Esophagus muscularis mucosa (tissue), 4 donors: ENCODE measurements at regions of chr2 and their contacts with region 1.

Region 1: DNA sequence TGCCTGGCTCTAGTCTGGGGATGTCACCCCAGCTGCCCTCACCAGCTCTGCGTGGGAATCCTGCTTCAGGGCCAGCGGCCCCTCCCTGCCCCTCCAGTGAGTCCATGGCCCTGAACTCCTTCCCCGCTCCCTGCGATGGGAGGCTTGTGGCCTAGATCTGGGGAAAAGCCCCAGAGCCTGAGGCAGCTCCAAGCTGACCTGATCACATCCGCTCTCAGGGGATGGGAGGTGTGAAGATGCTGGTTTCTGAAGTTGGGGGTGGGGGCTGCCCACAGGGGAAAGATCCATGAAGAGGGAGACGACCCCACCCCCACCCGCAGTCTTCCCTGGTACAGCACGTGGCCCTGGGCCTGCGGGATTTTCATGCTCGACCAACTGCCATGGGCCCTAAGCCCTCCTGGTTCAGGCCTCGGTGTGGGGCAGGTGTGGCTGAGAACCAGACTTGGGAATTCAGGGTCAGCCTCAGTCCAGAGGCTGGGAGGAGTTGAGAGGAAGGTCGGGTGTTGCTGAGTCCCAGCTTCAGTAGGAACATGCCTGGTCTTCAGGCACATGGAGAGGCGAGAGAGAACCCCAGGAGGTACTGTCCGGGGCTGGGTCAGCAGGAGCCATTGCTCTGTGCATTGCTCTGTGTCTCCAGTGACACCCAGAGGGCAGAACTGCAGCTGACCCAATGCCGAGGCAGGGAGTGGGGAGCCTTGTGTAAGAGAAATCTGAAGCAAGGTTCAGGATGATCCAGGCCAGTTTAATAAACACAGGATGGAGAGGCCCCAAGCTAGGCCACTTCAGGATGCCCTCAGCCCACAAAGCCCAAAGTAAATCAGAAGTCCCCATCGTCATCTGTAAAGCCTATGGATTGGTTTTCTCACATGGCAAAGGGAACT is 115.1 kb downstream of the CAPN13 start:
- DNase-seq: peak; percentile 88
- H3K4me3 ChIP-seq: no peak overlapping the region
- H3K27ac ChIP-seq: peak overlapping the region; percentile 18 to 82 (median 55)
- H3K4me1 ChIP-seq: peaks cover 33 to 84% (median 80%) of the 10 kb centered on the region in 4 donors
- H3K27me3 ChIP-seq: no peaks in the 10 kb centered on the region
- CTCF ChIP-seq: peak in 1 of 3 experiments; percentile 25
- EP300 ChIP-seq: no peak
- POLR2A ChIP-seq: no peak

Region 2: DNA sequence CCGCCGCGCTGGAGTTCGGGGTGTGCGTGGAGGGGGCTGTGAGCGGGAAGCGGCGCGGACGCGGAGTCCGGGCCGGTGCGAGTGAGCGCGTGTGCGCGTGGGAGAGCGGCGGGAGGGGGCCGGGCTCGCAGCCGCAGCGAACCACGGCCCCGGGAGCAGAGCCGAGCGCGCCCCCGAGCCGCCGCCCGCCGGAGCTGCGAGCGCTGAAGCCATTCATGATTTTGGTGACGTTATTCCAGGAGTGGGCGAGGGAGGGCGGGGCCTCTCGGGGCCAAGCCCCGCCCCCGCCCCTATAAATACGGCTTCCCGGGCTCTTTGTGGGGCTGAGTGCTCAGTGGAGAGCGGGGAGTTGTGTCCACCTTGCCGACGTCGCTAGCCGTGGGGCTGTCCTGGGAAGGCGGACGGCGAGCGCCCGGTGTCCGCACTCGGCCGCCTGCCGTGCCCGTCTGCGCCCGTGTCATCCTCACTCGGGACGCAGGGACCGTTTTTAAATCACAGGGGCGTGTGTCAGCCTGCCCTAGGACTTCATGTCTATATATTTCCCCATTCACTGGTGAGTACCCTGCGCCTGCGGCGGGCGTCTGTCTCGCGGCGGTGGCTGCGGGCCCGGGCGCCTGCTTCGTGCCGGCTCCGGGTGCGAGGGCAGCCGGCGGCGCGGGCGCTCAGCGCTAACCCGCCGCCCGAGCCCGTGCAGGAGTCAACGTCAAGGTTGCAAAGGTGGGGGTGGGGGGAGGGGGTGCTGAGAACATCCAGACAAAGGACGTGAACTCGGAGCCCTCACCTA is 460.8 kb before region 1 on chr2 and contains the start of gene LBH:
- intact Hi-C with region 1: loop called (anchors 5 kb)
- DNase-seq: peak; percentile 98
- H3K4me3 ChIP-seq: peak within 1 kb of the TSS; percentile 72 to 96 (median 82)
- H3K27ac ChIP-seq: peak within 1 kb of the TSS; percentile 90 to 95 (median 92)
- H3K4me1 ChIP-seq: peaks cover 33 to 57% (median 50%) of the 10 kb centered on the region in 4 donors
- H3K27me3 ChIP-seq: no peaks in the 10 kb centered on the region
- CTCF ChIP-seq: no peak
- EP300 ChIP-seq: no peak
- POLR2A ChIP-seq: peak; percentile 98
- total RNA-seq, gene LBH: 120 to 1,007 (median 283) TPM

Region 3: DNA sequence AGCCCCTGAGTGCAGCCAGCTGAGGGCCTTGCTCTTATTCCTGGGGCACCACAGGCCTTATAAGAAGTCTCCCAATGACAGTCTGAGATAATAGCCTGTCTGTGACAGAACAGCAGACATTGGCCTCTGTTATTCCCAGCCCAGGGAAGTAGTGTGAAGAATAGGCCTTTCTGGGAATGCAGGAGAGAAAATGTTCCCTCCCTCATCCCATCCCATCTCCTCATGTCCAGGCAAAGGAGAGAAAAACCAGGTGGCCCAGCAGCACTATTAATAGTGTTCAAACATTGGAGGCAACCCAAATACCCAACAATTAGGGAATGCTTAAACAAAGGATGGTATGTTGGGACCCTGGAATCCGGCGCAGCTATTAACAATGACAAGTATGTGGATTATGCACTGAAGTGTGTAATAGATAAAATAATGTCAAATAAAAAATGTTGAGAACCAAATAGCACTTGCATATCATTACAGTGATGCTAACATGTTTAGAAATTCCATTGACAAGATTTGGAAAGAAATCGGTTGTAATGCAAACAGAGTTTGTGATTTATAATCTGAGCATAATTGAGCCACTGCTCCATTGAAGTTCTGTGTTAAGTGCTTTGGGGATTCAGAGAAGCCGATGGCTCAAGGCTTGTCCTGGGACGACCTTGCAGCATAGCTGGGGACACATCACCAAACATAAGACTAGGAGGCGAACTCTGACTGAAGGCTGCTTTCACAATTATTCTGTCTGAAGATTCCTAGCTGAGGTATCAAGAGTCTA is 391.5 kb before region 1 on chr2:
- intact Hi-C with region 1: loop called (anchors 5 kb)
- DNase-seq: no peak
- H3K4me3 ChIP-seq: peak overlapping the region in 1 of 4 donors; percentile 40
- H3K27ac ChIP-seq: peak overlapping the region; percentile 82 to 88 (median 85)
- H3K4me1 ChIP-seq: peaks cover 28 to 36% (median 32%) of the 10 kb centered on the region in 4 donors
- H3K27me3 ChIP-seq: no peaks in the 10 kb centered on the region
- CTCF ChIP-seq: no peak
- EP300 ChIP-seq: peak; percentile 71
- POLR2A ChIP-seq: no peak

Region 4: GRCh38 chr2:30346471-30347169 is 345.6 kb before region 1 on chr2:
- intact Hi-C with region 1: loop called (anchors 5 kb)
- DNase-seq: no peak
- H3K4me3 ChIP-seq: peak overlapping the region; percentile 35 to 57 (median 44)
- H3K27ac ChIP-seq: peak overlapping the region; percentile 74 to 79 (median 76)
- H3K4me1 ChIP-seq: peaks cover 27 to 36% (median 31%) of the 10 kb centered on the region in 4 donors
- H3K27me3 ChIP-seq: no peaks in the 10 kb centered on the region
- CTCF ChIP-seq: no peak
- EP300 ChIP-seq: no peak
- POLR2A ChIP-seq: no peak

Region 5: GRCh38 chr2:32384529-32384928 is 1692.3 kb after region 1 on chr2:
- intact Hi-C with region 1: no loop called
- DNase-seq: no peak
- H3K4me3 ChIP-seq: no peak overlapping the region
- H3K27ac ChIP-seq: no peak overlapping the region
- H3K4me1 ChIP-seq: peaks cover 2 to 10% (median 4%) of the 10 kb centered on the region in 4 donors
- H3K27me3 ChIP-seq: no peaks in the 10 kb centered on the region
- CTCF ChIP-seq: no peak
- EP300 ChIP-seq: no peak
- POLR2A ChIP-seq: no peak